ENCODE measurements at regions of chr14 and their contacts with region 1.

Region 1: GRCh38 chr14:63641473-63642228 is at the start of gene WDR89:
- DNase-seq: peak; percentile 99
- H3K4me3 ChIP-seq: peak within 1 kb of the TSS; percentile 69
- H3K27ac ChIP-seq: peak within 1 kb of the TSS; percentile 90
- H3K4me1 ChIP-seq: peaks cover 30% of the 10 kb centered on the region
- H3K27me3 ChIP-seq: no peaks in the 10 kb centered on the region
- CTCF ChIP-seq: peak; percentile 91
- total RNA-seq, gene WDR89: 18.2 and 18.6 TPM in 2 replicates

Region 2: DNA sequence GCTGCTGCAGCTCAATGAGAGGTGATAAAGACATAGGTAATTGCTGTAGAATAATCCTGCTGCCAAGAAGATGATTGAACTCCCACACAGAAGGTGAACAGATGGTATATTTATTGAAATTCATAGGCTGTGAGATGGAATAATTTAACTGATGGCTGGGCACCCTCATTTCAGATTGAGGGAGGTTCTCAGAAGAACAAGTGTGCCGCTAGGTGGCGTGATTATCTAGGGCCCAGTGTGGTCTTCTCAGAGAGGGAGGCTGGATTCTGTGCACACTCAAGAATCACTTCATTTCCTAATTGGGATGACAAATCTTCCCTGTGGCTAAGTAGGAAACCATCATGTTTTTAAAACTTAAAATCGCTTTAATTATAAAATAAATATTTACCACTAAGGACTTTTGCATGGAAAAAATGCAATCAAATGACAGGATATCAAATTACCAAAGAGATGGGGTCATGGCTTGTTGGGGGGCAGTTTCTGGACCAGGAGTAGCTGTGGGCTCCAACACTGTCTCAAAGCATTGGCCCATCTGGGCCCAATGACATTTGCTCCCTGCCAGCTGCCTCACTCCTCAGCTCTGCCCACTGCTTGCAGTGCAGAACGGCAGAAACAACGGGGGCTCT is 1747.1 kb before region 1 on chr14:
- CTCF ChIA-PET with region 1: no interaction called
- POLR2A ChIA-PET with region 1: interaction called, 16 read pairs
- intact Hi-C with region 1: no loop called
- DNase-seq: peak; percentile 64 to 65
- H3K4me3 ChIP-seq: no peak overlapping the region
- H3K27ac ChIP-seq: no peak overlapping the region
- H3K4me1 ChIP-seq: no peaks in the 10 kb centered on the region
- H3K27me3 ChIP-seq: no peaks in the 10 kb centered on the region
- CTCF ChIP-seq: peak; percentile 91

Region 3: GRCh38 chr14:63437953-63438757 is 203.5 kb before region 1 on chr14:
- CTCF ChIA-PET with region 1: no interaction called
- POLR2A ChIA-PET with region 1: interaction called, 7 read pairs
- intact Hi-C with region 1: loop called (anchors 1 kb)
- DNase-seq: peak; percentile 91 to 96
- H3K4me3 ChIP-seq: peak overlapping the region; percentile 53; the same call in 1 of the 2 replicates
- H3K27ac ChIP-seq: peak overlapping the region; percentile 79
- H3K4me1 ChIP-seq: peaks cover 37% of the 10 kb centered on the region
- H3K27me3 ChIP-seq: no peaks in the 10 kb centered on the region
- CTCF ChIP-seq: peak; percentile 39; the same call in 1 of the 2 replicates

Region 4: GRCh38 chr14:63663430-63664341 is 22.0 kb after region 1 on chr14:
- CTCF ChIA-PET with region 1: interaction called, 6 read pairs
- POLR2A ChIA-PET with region 1: interaction called, 9 read pairs
- intact Hi-C with region 1: loop called (anchors 1 kb)
- DNase-seq: peak; percentile 88 to 91
- H3K4me3 ChIP-seq: no peak overlapping the region
- H3K27ac ChIP-seq: peak overlapping the region; percentile 39
- H3K4me1 ChIP-seq: peaks cover 47% of the 10 kb centered on the region
- H3K27me3 ChIP-seq: no peaks in the 10 kb centered on the region
- CTCF ChIP-seq: no peak

Region 5: DNA sequence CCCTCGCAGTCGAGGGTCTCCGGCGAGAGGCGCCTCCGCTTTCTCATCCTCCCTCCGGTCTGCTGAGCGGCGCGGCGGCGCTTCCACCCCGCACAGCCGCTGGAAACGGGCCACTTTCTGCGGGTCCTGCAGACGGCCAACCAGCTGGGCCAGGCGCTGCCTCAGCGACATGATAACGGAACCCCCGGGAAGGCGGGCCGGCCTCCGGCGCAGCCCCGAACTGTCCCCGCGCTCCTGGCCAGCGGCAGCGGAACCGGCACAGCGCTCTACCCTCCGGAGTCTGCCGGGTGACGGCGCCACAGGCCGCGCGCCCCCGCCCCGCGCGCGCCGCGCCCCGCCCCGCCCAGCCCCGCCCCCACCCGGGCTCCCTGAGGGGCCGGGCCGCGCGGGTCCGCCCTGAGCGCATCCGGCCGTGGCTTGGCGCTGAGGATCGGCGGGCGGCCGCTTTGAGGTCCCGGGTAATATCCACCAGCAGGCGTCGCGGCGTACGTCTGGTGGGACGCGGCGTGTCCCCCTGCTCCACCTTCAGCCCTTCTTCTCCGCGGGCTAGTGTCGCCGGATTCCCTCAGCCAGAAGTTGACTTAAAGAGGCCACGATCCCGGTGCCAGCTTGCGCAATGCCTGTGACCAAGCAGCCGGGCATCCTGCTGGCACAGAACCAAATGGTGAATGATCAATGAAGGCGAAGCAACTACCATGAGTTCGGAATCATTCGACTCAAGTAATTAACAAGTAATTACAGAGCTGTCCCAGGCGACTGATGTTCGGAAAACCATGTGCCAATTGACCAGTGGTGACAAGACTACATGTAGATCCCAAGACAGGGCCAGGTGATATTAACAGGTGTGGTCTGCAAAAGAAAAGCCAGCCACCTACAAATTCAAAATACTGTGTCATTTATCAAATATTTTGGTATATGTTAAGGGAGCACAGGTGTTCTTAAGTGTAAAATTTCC is 86.4 kb after region 1 on chr14 and contains the start of gene SGPP1:
- CTCF ChIA-PET with region 1: no interaction called
- POLR2A ChIA-PET with region 1: interaction called, 15 read pairs
- intact Hi-C with region 1: loop called (anchors 1 kb)
- DNase-seq: peak; percentile 83
- H3K4me3 ChIP-seq: peak within 1 kb of the TSS; percentile 83
- H3K27ac ChIP-seq: peak within 1 kb of the TSS; percentile 43
- H3K4me1 ChIP-seq: peaks cover 28% of the 10 kb centered on the region
- H3K27me3 ChIP-seq: no peaks in the 10 kb centered on the region
- CTCF ChIP-seq: no peak; the same call in 1 of the 2 replicates
- total RNA-seq, gene SGPP1: 20.6 and 26.7 TPM in 2 replicates

Region 6: GRCh38 chr14:63852817-63853731 is 211.4 kb after region 1 on chr14 and contains the start of gene SYNE2:
- CTCF ChIA-PET with region 1: no interaction called
- POLR2A ChIA-PET with region 1: interaction called, 3 read pairs
- intact Hi-C with region 1: loop called (anchors 10 kb)
- DNase-seq: peak; percentile 52 to 87
- H3K4me3 ChIP-seq: peak within 1 kb of the TSS; percentile 72
- H3K27ac ChIP-seq: no peak within 1 kb of the TSS
- H3K4me1 ChIP-seq: peaks cover 23% of the 10 kb centered on the region
- H3K27me3 ChIP-seq: no peaks in the 10 kb centered on the region
- CTCF ChIP-seq: no peak
- total RNA-seq, gene SYNE2: 90.3 and 94.2 TPM in 2 replicates

Measured in PC-9 (cell line).